Endothelial cell of umbilical vein (primary cell): ENCODE measurements at regions of chr17 and their contacts with region 1.

Region 1: DNA sequence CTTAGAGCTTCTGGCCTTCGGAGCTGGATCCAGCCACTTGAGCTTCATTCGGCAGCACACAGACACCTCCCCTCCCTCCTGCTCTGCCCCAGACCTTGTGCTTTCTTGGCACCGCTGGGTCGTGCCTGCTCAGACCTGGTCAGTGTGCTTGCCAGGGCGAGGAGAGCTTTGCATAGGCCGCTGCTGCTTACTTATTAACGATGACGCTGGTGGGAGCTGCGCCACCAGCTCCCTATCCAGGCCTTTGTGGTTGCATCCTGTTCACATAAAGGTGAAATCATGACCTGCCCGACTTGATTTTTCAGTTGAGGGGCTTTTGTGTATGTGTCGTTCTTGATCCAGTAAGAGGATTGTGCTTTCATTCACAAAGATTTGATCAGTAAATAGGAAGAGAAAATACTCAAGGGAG is 101.1 kb downstream of the MSI2 start:
- DNase-seq: no peak
- H3K4me3 ChIP-seq: peak overlapping the region in 1 of 3 experiments; percentile 35
- H3K27ac ChIP-seq: no peak overlapping the region
- H3K4me1 ChIP-seq: peaks cover 5% of the 10 kb centered on the region
- H3K27me3 ChIP-seq: no peaks in the 10 kb centered on the region
- CTCF ChIP-seq: no peak
- POLR2A ChIP-seq: no peak

Region 2: DNA sequence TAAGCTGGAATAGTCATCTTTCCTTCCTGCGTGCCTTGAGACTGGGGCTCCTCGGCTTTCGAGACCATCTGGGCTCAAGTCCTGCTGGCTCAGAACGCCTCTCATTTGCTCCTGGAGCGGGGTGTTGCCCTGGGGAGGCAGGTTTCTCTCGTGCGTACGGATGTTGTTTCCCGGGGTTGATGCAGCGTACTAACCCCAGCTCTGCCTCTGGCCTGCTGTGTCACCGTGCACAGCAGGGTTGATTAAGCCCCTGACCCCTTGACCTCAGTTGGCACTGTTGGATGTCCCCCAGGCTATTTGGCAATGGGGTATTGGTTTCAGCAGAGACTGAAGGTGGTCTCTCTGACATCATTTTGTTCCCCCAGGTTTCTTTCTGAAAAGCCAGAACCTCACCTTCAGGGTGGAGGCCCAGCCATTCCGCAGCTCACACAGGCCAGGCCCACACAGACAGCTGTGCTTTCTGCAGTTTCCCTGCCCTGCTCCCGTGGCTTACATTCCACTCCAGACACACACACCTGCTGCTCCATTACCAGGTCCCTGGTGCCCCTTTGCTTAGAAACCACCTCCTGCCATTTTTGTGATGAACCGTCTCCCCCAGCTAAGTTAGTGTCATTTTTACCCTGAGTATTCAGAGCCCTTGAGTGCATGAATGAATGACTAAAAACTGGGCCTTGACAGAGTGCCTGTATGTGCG is 154.2 kb after region 1 on chr17:
- CTCF ChIA-PET with region 1: no interaction called
- POLR2A ChIA-PET with region 1: no interaction called
- dilution Hi-C with region 1: no loop called
- intact Hi-C with region 1: loop called (anchors 5 kb)
- DNase-seq: no peak
- H3K4me3 ChIP-seq: no peak overlapping the region
- H3K27ac ChIP-seq: no peak overlapping the region
- H3K4me1 ChIP-seq: no peaks in the 10 kb centered on the region
- H3K27me3 ChIP-seq: no peaks in the 10 kb centered on the region
- CTCF ChIP-seq: no peak
- POLR2A ChIP-seq: no peak